ENCODE measurements at regions of chr9 and their contacts with region 1.

Region 1: GRCh38 chr9:21812946-21813568 is 10.6 kb downstream of the MTAP start:
- DNase-seq: peak; percentile 62
- H3K4me3 ChIP-seq: no peak overlapping the region
- H3K27ac ChIP-seq: peak overlapping the region; percentile 50
- H3K4me1 ChIP-seq: peaks cover 61% of the 10 kb centered on the region
- H3K27me3 ChIP-seq: no peaks in the 10 kb centered on the region
- CTCF ChIP-seq: peak; percentile 86

Region 2: GRCh38 chr9:22008736-22009562 is 195.9 kb after region 1 on chr9 and contains the start of gene CDKN2B:
- intact Hi-C with region 1: loop called (anchors 5 kb)
- DNase-seq: peak; percentile 95
- H3K4me3 ChIP-seq: peak within 1 kb of the TSS; percentile 84
- H3K27ac ChIP-seq: peak within 1 kb of the TSS; percentile 93
- H3K4me1 ChIP-seq: peaks cover 20% of the 10 kb centered on the region
- H3K27me3 ChIP-seq: peaks cover 41% of the 10 kb centered on the region
- CTCF ChIP-seq: peak; percentile 91
- total RNA-seq, gene CDKN2B: 0.82 TPM

Region 3: GRCh38 chr9:22037954-22038690 is 225.1 kb after region 1 on chr9:
- intact Hi-C with region 1: loop called (anchors 5 kb)
- DNase-seq: no peak
- H3K4me3 ChIP-seq: no peak overlapping the region
- H3K27ac ChIP-seq: no peak overlapping the region
- H3K4me1 ChIP-seq: no peaks in the 10 kb centered on the region
- H3K27me3 ChIP-seq: no peaks in the 10 kb centered on the region
- CTCF ChIP-seq: peak; percentile 64

Region 4: GRCh38 chr9:22238809-22239684 is 426.0 kb after region 1 on chr9:
- intact Hi-C with region 1: loop called (anchors 5 kb)
- DNase-seq: no peak
- H3K4me3 ChIP-seq: no peak overlapping the region
- H3K27ac ChIP-seq: no peak overlapping the region
- H3K4me1 ChIP-seq: no peaks in the 10 kb centered on the region
- H3K27me3 ChIP-seq: no peaks in the 10 kb centered on the region
- CTCF ChIP-seq: peak; percentile 60